Left ventricle myocardium inferior (tissue), 1 donor: ENCODE measurements at regions of chr2 and their contacts with region 1.

Region 1: GRCh38 chr2:207474863-207475485 is 54.8 kb upstream of the CREB1 start:
- DNase-seq: no peak
- H3K4me3 ChIP-seq: peak overlapping the region; percentile 36
- H3K27ac ChIP-seq: no peak overlapping the region
- H3K4me1 ChIP-seq: peaks cover 27% of the 10 kb centered on the region
- H3K27me3 ChIP-seq: no peaks in the 10 kb centered on the region
- CTCF ChIP-seq: peak; percentile 76

Region 2: DNA sequence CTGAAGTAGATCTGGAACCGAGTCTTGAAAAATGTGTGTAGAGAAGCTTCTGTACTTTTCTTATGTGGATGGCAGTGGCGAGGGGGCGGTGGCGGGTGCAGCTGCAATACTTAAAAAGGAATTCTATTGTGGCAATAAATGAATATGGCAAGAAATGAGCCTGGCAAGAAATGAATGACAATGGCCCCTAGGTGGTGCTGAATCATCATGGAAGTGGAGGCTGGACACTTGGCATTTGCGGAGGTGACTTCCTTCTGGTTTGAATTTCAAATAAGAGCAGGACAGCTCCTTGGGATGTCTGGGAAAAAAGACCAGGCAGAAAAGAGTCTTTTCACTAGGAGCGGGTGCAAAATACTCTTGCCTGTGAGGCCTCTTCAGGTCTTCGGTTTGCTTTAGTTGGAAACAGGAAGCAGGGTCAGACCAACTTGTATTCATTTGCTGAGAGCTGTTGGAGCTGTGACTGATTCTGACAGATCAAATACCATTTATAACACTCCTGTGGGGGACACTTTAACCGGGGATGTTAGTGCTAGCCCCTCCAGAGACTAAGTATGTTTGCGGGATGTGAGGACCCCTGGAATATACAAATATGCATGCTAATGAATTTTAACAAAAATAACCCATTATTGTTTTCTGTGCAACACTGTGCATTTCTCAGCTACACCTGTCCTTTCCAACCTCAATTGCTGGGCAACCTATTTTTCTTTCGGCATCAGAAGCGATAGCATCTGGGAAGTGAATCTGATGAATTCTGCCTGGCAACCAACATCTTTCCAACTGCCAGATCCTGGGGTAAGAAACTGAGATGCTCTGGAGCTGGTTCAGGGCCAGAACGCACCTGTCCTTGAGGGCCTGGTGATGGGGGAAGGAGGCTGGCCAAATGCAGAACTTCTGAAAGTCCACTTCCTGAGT is 674.2 kb before region 1 on chr2:
- intact Hi-C with region 1: loop called (anchors 2 kb)
- DNase-seq: peak; percentile 31
- H3K4me3 ChIP-seq: no peak overlapping the region
- H3K27ac ChIP-seq: no peak overlapping the region
- H3K4me1 ChIP-seq: peaks cover 35% of the 10 kb centered on the region
- H3K27me3 ChIP-seq: no peaks in the 10 kb centered on the region
- CTCF ChIP-seq: peak; percentile 81

Region 3: GRCh38 chr2:207619764-207620203 is 144.8 kb after region 1 on chr2:
- intact Hi-C with region 1: no loop called
- DNase-seq: no peak
- H3K4me3 ChIP-seq: no peak overlapping the region
- H3K27ac ChIP-seq: no peak overlapping the region
- H3K4me1 ChIP-seq: peaks cover 32% of the 10 kb centered on the region
- H3K27me3 ChIP-seq: no peaks in the 10 kb centered on the region
- CTCF ChIP-seq: no peak